ENCODE measurements at regions of chr4 and their contacts with region 1.

Region 1: GRCh38 chr4:173257732-173258717 is 76.1 kb downstream of the HMGB2 start:
- DNase-seq: peak; percentile 77

Region 2: GRCh38 chr4:173013232-173013930 is 244.6 kb before region 1 on chr4:
- in situ Hi-C with region 1: loop called (anchors 25 kb)
- DNase-seq: peak; percentile 67

Measured in SK-MEL-5 (cell line).